Colonic mucosa (tissue), 4 donors: ENCODE measurements at regions of chr16 and their contacts with region 1.

Region 1: GRCh38 chr16:11356573-11357331 is 11.5 kb downstream of the RMI2 start:
- DNase-seq: peak; percentile 78
- H3K4me3 ChIP-seq: no peak overlapping the region
- H3K27ac ChIP-seq: no peak overlapping the region
- H3K4me1 ChIP-seq: peaks cover 4% of the 10 kb centered on the region
- H3K27me3 ChIP-seq: no peaks in the 10 kb centered on the region
- CTCF ChIP-seq: peak; percentile 52

Region 2: GRCh38 chr16:10971560-10971961 is 385.2 kb before region 1 on chr16:
- intact Hi-C with region 1: loop called (anchors 5 kb)
- DNase-seq: peak; percentile 46
- H3K4me3 ChIP-seq: no peak overlapping the region
- H3K27ac ChIP-seq: no peak overlapping the region
- H3K4me1 ChIP-seq: no peaks in the 10 kb centered on the region
- H3K27me3 ChIP-seq: no peaks in the 10 kb centered on the region
- CTCF ChIP-seq: peak; percentile 71